ENCODE measurements at regions of chr17 and their contacts with region 1.

Region 1: DNA sequence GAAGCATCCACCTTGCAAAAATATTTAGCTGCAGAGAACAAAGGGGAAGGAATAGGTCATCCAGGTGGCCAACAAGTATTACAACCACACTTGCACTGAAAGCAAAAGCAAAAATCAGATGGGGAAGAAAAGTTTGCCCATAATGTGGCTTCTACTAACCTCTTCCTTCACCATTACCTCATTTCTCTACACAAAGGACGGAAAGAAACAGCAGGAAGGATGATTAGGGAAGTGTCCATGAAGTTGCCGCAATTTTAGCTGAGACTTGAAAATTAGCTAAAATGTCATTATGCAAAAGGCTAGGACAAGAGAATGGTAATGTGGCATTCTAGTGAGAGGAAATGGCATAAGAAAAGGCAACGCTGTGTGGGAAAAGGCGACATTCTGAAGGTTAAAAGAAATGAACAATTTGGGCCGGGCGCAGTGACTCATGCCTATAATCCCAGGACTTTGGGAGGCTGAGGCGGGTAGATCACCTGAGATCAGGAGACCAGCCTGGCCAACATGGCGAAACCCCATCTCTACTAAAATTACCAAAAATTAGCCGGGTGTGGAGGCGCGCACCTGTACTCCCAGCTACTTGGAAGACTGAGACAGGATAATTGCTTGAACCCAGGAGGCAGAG is 13.7 kb downstream of the KANSL1 start:
- DNase-seq: no peak
- ATAC-seq: peak; percentile 79
- H3K4me3 Mint-ChIP-seq: peak overlapping the region; percentile 38
- H3K27ac Mint-ChIP-seq: peak overlapping the region; percentile 65
- H3K4me1 Mint-ChIP-seq: peaks cover 66% of the 10 kb centered on the region
- H3K27me3 Mint-ChIP-seq: no peaks in the 10 kb centered on the region

Region 2: DNA sequence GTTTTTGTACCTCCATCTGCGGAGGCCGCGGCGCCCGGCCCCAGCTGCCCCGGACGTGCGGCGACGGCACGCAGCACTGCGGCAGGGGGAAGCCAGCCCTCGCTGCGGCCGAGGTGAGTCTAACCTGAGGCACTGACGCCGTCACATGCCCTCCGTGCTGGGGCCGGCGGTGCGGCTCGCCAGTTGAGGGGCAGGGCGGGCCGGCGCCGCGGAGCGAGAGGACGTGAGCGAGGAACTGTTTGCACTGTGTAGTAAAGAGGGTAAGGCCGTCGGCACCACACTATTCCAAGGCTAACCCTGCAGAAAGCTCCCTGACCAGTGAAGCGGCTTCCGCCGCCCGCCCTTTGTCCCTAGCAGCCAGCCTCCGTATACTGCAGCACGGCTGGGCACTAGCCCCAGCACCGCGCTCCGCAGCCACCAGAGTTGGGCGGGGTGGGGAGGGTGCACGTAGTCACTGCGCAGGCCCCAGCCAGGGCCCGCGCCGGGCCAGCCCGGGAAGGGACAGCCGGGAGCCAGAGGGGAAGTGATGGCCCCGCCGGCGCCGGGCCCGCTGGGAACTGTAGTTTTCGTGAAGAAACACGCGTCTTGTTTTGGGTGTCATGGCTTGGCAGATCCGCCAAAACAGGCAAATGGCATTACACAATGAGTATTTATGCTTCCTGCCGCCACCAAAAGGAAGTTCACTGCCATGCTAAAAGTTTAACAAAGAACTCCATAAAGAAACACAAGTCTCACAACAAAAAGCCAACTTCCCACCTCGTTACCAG is 14.3 kb after region 1 on chr17:
- CTCF ChIA-PET with region 1: interaction called, 30 read pairs
- DNase-seq: peak; percentile 97
- ATAC-seq: peak; percentile 74
- H3K4me3 Mint-ChIP-seq: peak overlapping the region; percentile 85
- H3K27ac Mint-ChIP-seq: peak overlapping the region; percentile 98
- H3K4me1 Mint-ChIP-seq: peaks cover 62% of the 10 kb centered on the region
- H3K27me3 Mint-ChIP-seq: no peaks in the 10 kb centered on the region